ENCODE measurements at regions of chr16 and their contacts with region 1.

Region 1: GRCh38 chr16:30023586-30023985 is 588 bp downstream of the C16orf92 start:
- DNase-seq: no peak
- H3K4me3 ChIP-seq: no peak overlapping the region
- H3K27ac ChIP-seq: no peak overlapping the region
- H3K4me1 ChIP-seq: no peaks in the 10 kb centered on the region
- H3K27me3 ChIP-seq: no peaks in the 10 kb centered on the region
- CTCF ChIP-seq: no peak
- EP300 ChIP-seq: no peak
- POLR2A ChIP-seq: no peak

Region 2: GRCh38 chr16:29694384-29695195 is 329.0 kb before region 1 on chr16:
- intact Hi-C with region 1: loop called in 3 of 4 experiments (anchors 2 to 10 kb)
- DNase-seq: peak in 2 of 5 donors; percentile 18 to 31
- H3K4me3 ChIP-seq: no peak overlapping the region
- H3K27ac ChIP-seq: no peak overlapping the region
- H3K4me1 ChIP-seq: peaks cover 7% of the 10 kb centered on the region
- H3K27me3 ChIP-seq: no peaks in the 10 kb centered on the region
- CTCF ChIP-seq: no peak
- EP300 ChIP-seq: no peak
- POLR2A ChIP-seq: no peak

Region 3: DNA sequence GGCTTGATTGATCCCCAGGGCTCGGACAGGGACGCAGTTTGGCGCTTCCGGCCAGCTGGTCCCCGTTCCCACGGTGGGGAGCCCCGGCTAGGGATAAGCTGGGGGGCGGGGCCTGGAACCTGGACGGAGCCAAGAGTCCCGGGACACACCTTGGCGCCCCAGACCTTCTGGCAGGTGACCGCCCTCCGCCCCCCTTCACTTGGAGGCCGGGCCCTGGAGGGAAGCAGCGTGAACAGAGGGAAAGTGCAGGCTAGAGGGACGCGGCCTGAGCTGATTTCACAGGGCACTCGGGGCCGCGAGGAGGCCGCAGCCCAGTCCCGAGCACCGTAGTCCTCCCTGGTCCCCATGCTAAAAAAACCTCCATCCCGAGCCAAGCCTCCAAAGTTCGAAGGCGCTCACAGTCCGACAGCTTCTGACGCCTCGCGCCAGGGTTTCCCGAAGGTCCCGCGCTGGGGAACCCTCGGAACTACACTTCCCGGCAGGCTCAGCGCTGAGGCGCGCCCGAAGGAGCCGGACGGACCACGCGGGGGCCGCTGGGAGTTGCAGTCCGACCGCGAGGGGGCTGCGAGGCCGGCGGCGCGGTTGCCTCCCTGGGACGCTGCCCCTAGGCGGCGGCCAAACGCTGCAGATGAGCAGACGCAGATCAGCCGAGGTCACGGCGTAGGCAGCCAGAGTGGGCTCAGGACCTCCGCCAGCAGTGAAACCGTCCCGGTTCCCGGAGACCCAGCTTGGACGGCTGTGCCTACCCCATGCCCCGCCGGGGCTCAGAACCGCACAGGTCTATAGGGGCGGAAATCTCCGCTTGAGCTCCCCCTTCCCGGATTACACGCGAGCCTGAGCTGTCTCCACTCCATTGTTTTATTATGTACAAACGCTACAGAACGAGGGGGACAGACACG is 68.1 kb after region 1 on chr16 and contains the start of gene TBX6:
- intact Hi-C with region 1: no loop called
- DNase-seq: peak; percentile 89 to 95 (median 92)
- H3K4me3 ChIP-seq: peak within 1 kb of the TSS; percentile 47
- H3K27ac ChIP-seq: peak within 1 kb of the TSS; percentile 66 to 70
- H3K4me1 ChIP-seq: peaks cover 12% of the 10 kb centered on the region
- H3K27me3 ChIP-seq: no peaks in the 10 kb centered on the region
- CTCF ChIP-seq: peak; percentile 79 to 99 (median 97)
- EP300 ChIP-seq: no peak
- POLR2A ChIP-seq: no peak
- total RNA-seq, gene TBX6: 0.23 to 1.5 (median 0.75) TPM

Region 4: GRCh38 chr16:30122604-30123160 is 99.1 kb after region 1 on chr16:
- intact Hi-C with region 1: no loop called
- DNase-seq: no peak
- H3K4me3 ChIP-seq: peak overlapping the region; percentile 96
- H3K27ac ChIP-seq: peak overlapping the region; percentile 81 to 83
- H3K4me1 ChIP-seq: no peaks in the 10 kb centered on the region
- H3K27me3 ChIP-seq: no peaks in the 10 kb centered on the region
- CTCF ChIP-seq: no peak
- EP300 ChIP-seq: no peak
- POLR2A ChIP-seq: no peak

Measured in ovary (tissue), 10 donors.